Naive thymus-derived CD4-positive, alpha-beta T cell (primary cell): ENCODE measurements at regions of chr12 and their contacts with region 1.

Region 1: GRCh38 chr12:116737774-116738700 is at the starts of genes RNFT2 and SPRING1:
- DNase-seq: peak; percentile 94 to 99 (median 99)
- ATAC-seq: peak; percentile 99
- H3K4me3 ChIP-seq: peak within 1 kb of the TSS; percentile 82
- H3K4me3 Mint-ChIP-seq: peak within 1 kb of the TSS; percentile 94 to 100 (median 96)
- H3K27ac ChIP-seq: peak within 1 kb of the TSS; percentile 75
- H3K27ac Mint-ChIP-seq: peak within 1 kb of the TSS; percentile 75 to 92 (median 88)
- H3K4me1 ChIP-seq: peaks cover 4 to 12% of the 10 kb centered on the region in 2 donors
- H3K4me1 Mint-ChIP-seq: peaks cover 18 to 43% (median 36%) of the 10 kb centered on the region in 7 donors
- H3K27me3 ChIP-seq: no peaks in the 10 kb centered on the region
- H3K27me3 Mint-ChIP-seq: no peaks in the 10 kb centered on the region
- total RNA-seq, gene RNFT2: 5.4 to 8.3 (median 7.4) TPM
- total RNA-seq, gene SPRING1: 12.1 to 29.5 (median 25.4) TPM

Region 2: GRCh38 chr12:116533343-116534251 is 204.4 kb before region 1 on chr12:
- CTCF ChIA-PET with region 1: no interaction called
- POLR2A ChIA-PET with region 1: no interaction called
- intact Hi-C with region 1: loop called in 1 of 2 experiments (anchors 1 kb)
- DNase-seq: peak; percentile 47 to 79 (median 69)
- ATAC-seq: peak; percentile 95
- H3K4me3 ChIP-seq: peak overlapping the region; percentile 84
- H3K4me3 Mint-ChIP-seq: peak overlapping the region; percentile 82 to 97 (median 88)
- H3K27ac ChIP-seq: peak overlapping the region; percentile 47
- H3K27ac Mint-ChIP-seq: peak overlapping the region in 8 of 9 donors; percentile 22 to 82 (median 70)
- H3K4me1 ChIP-seq: peaks cover 6 to 9% of the 10 kb centered on the region in 2 donors
- H3K4me1 Mint-ChIP-seq: peaks cover 20 to 40% (median 28%) of the 10 kb centered on the region in 7 donors
- H3K27me3 ChIP-seq: no peaks in the 10 kb centered on the region
- H3K27me3 Mint-ChIP-seq: peaks cover 0 to 14% (median 0%) of the 10 kb centered on the region in 5 donors

Region 3: GRCh38 chr12:116703214-116703795 is 34.7 kb before region 1 on chr12:
- CTCF ChIA-PET with region 1: interaction called, 5 read pairs
- POLR2A ChIA-PET with region 1: no interaction called
- intact Hi-C with region 1: loop called in 1 of 2 experiments (anchors 1 kb)
- DNase-seq: peak; percentile 26 to 69 (median 57)
- ATAC-seq: peak; percentile 77
- H3K4me3 ChIP-seq: no peak overlapping the region
- H3K4me3 Mint-ChIP-seq: no peak overlapping the region
- H3K27ac ChIP-seq: no peak overlapping the region
- H3K27ac Mint-ChIP-seq: peak overlapping the region in 1 of 9 donors; percentile 53
- H3K4me1 ChIP-seq: peaks cover 0 to 3% of the 10 kb centered on the region in 2 donors
- H3K4me1 Mint-ChIP-seq: peaks cover 2 to 6% (median 4%) of the 10 kb centered on the region in 7 donors
- H3K27me3 ChIP-seq: no peaks in the 10 kb centered on the region
- H3K27me3 Mint-ChIP-seq: peaks cover 3 to 11% (median 5%) of the 10 kb centered on the region in 5 donors

Region 4: DNA sequence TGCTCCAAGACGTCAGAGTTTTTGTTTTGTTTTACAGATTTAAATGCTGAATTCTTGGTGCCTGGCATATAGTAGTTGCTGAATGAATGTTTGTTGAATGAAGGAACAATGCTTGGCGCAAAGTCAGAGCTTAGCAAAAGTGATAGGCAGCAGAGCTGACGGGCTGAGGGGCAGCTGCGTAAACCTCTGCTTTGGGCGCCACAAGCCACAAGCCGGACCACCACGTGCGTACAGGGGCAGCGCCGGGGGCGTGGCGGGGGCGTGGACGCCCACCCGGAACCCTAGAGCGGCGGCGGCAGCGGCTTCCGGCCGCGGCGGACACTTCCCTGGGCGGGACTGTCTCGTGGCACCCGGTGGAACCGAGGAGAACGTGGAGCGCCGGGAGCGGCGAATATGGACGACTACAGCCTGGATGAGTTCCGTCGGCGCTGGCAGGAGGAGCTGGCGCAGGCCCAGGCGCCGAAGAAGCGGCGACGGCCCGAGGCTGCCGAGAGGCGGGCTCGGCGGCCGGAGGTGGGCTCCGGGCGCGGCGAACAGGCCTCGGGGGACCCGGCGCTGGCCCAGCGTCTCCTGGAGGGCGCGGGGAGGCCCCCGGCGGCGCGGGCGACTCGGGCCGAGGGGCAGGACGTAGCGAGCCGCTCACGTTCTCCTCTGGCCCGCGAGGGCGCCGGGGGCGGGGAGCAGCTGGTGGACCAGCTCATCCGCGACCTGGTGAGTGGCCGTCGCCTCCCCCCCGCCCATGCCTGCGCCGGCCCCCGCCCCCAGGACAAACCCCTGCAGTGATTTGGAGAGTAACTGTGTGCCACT is 172.8 kb after region 1 on chr12 and contains the start of gene FBXW8:
- CTCF ChIA-PET with region 1: no interaction called
- POLR2A ChIA-PET with region 1: no interaction called
- intact Hi-C with region 1: loop called (anchors 1 kb)
- DNase-seq: peak; percentile 23 to 73 (median 44)
- ATAC-seq: peak; percentile 92
- H3K4me3 ChIP-seq: peak within 1 kb of the TSS; percentile 65
- H3K4me3 Mint-ChIP-seq: peak within 1 kb of the TSS; percentile 89 to 97 (median 93)
- H3K27ac ChIP-seq: peak within 1 kb of the TSS; percentile 61
- H3K27ac Mint-ChIP-seq: peak within 1 kb of the TSS; percentile 65 to 91 (median 83)
- H3K4me1 ChIP-seq: peaks cover 0 to 6% of the 10 kb centered on the region in 2 donors
- H3K4me1 Mint-ChIP-seq: peaks cover 21 to 48% (median 39%) of the 10 kb centered on the region in 7 donors
- H3K27me3 ChIP-seq: no peaks in the 10 kb centered on the region
- H3K27me3 Mint-ChIP-seq: peaks cover 0 to 30% (median 0%) of the 10 kb centered on the region in 5 donors
- total RNA-seq, gene FBXW8: 10.8 to 13.2 (median 12.6) TPM

Region 5: GRCh38 chr12:116969615-116970580 is 231.9 kb after region 1 on chr12:
- CTCF ChIA-PET with region 1: no interaction called
- POLR2A ChIA-PET with region 1: no interaction called
- intact Hi-C with region 1: no loop called
- DNase-seq: no peak
- ATAC-seq: no peak
- H3K4me3 ChIP-seq: no peak overlapping the region
- H3K4me3 Mint-ChIP-seq: no peak overlapping the region
- H3K27ac ChIP-seq: no peak overlapping the region
- H3K27ac Mint-ChIP-seq: no peak overlapping the region
- H3K4me1 ChIP-seq: no peaks in the 10 kb centered on the region
- H3K4me1 Mint-ChIP-seq: no peaks in the 10 kb centered on the region
- H3K27me3 ChIP-seq: no peaks in the 10 kb centered on the region
- H3K27me3 Mint-ChIP-seq: no peaks in the 10 kb centered on the region

Region 6: DNA sequence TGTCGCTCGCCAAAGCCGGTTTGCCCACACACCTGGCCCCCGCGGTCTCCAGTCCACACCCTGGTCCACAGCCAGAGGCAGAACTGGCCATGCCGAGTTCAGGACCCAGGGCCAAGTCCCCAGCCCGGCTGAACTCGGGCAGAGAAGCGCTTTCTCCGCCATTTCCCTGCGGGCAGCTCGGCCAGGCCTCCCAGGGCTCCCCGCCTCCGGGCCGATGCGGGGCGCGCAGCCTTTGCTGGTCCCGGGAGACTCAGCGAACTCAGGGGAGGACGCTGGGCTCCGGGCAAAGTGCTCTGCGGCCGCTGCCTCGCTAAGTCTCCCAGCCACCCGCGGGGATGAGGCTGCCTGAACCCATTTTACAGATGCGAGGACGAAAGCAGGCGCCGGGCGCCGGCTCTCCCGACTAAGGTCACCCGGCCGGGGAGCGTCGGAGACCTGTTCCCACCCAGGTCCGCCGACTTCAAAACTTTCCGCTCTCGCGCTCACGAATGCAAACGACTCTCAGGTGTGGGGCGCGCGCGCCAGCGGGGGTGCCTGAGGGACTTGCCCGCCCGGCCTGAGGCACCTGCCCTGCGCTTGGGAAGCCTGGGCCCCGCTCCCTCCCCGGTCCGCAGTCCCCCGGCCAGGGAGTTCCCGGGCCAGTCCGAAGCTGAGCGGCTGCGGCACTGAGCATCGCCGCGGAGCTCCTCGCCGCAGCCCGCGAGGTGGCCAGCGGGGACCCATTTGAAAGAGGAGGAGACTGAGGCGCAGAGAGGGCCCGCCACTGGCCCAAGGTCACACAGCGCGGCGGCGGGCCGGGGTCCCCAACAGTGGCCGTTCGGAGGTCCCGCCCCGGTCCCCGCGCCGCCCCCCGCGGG is 360.6 kb after region 1 on chr12:
- CTCF ChIA-PET with region 1: no interaction called
- POLR2A ChIA-PET with region 1: no interaction called
- intact Hi-C with region 1: loop called in 1 of 2 experiments (anchors 1 kb)
- DNase-seq: peak in 3 of 9 donors; percentile 8 to 11 (median 11)
- ATAC-seq: peak; percentile 30
- H3K4me3 ChIP-seq: peak overlapping the region; percentile 56
- H3K4me3 Mint-ChIP-seq: peak overlapping the region; percentile 68 to 85 (median 79)
- H3K27ac ChIP-seq: no peak overlapping the region
- H3K27ac Mint-ChIP-seq: peak overlapping the region in 1 of 9 donors; percentile 23
- H3K4me1 ChIP-seq: peaks cover 4 to 5% of the 10 kb centered on the region in 2 donors
- H3K4me1 Mint-ChIP-seq: peaks cover 0 to 27% (median 9%) of the 10 kb centered on the region in 7 donors
- H3K27me3 ChIP-seq: peaks cover 0 to 10% of the 10 kb centered on the region in 2 donors
- H3K27me3 Mint-ChIP-seq: peaks cover 16 to 37% (median 21%) of the 10 kb centered on the region in 5 donors

Region 7: GRCh38 chr12:117190210-117190781 is 452.3 kb after region 1 on chr12 and contains the start of gene FBXO21:
- CTCF ChIA-PET with region 1: no interaction called
- POLR2A ChIA-PET with region 1: no interaction called
- intact Hi-C with region 1: loop called (anchors 1 kb)
- DNase-seq: peak; percentile 92 to 98 (median 95)
- ATAC-seq: peak; percentile 99
- H3K4me3 ChIP-seq: peak within 1 kb of the TSS; percentile 65
- H3K4me3 Mint-ChIP-seq: peak within 1 kb of the TSS; percentile 93 to 97 (median 95)
- H3K27ac ChIP-seq: peak within 1 kb of the TSS; percentile 77
- H3K27ac Mint-ChIP-seq: peak within 1 kb of the TSS; percentile 85 to 95 (median 93)
- H3K4me1 ChIP-seq: peaks cover 8 to 11% of the 10 kb centered on the region in 2 donors
- H3K4me1 Mint-ChIP-seq: peaks cover 13 to 52% (median 34%) of the 10 kb centered on the region in 7 donors
- H3K27me3 ChIP-seq: no peaks in the 10 kb centered on the region
- H3K27me3 Mint-ChIP-seq: peaks cover 0 to 12% (median 0%) of the 10 kb centered on the region in 5 donors
- total RNA-seq, gene FBXO21: 30.4 to 62.9 (median 48.6) TPM

Region 8: GRCh38 chr12:118061011-118061875 is 1323.2 kb after region 1 on chr12 and contains the start of gene WSB2:
- CTCF ChIA-PET with region 1: no interaction called
- POLR2A ChIA-PET with region 1: no interaction called
- intact Hi-C with region 1: loop called in 1 of 2 experiments (anchors 5 kb)
- DNase-seq: peak; percentile 24 to 81 (median 39)
- ATAC-seq: peak; percentile 53
- H3K4me3 ChIP-seq: peak within 1 kb of the TSS; percentile 88
- H3K4me3 Mint-ChIP-seq: peak within 1 kb of the TSS; percentile 88 to 100 (median 96)
- H3K27ac ChIP-seq: peak within 1 kb of the TSS; percentile 80
- H3K27ac Mint-ChIP-seq: peak within 1 kb of the TSS; percentile 92 to 98 (median 94)
- H3K4me1 ChIP-seq: peaks cover 13 to 32% of the 10 kb centered on the region in 2 donors
- H3K4me1 Mint-ChIP-seq: peaks cover 44 to 65% (median 57%) of the 10 kb centered on the region in 7 donors
- H3K27me3 ChIP-seq: no peaks in the 10 kb centered on the region
- H3K27me3 Mint-ChIP-seq: no peaks in the 10 kb centered on the region
- total RNA-seq, gene WSB2: 12.2 to 52.2 (median 19.1) TPM